Natural killer cell (primary cell): ENCODE measurements at regions of chr19 and their contacts with region 1.

Region 1: GRCh38 chr19:13104360-13104847 is 1.7 kb upstream of the LYL1 start:
- DNase-seq: peak; percentile 69 to 77
- ATAC-seq: peak; percentile 58 to 62 (median 60)
- H3K4me3 ChIP-seq: peak overlapping the region; percentile 49
- H3K4me3 Mint-ChIP-seq: peak overlapping the region; percentile 93
- H3K27ac ChIP-seq: peak overlapping the region; percentile 84
- H3K27ac Mint-ChIP-seq: peak overlapping the region; percentile 70 to 88
- H3K4me1 ChIP-seq: peaks cover 69% of the 10 kb centered on the region
- H3K4me1 Mint-ChIP-seq: peaks cover 10 to 43% of the 10 kb centered on the region in 2 donors
- H3K27me3 ChIP-seq: no peaks in the 10 kb centered on the region
- H3K27me3 Mint-ChIP-seq: no peaks in the 10 kb centered on the region
- CTCF ChIP-seq: peak; percentile 97

Region 2: GRCh38 chr19:13044231-13044836 is 60.1 kb before region 1 on chr19:
- intact Hi-C with region 1: loop called (anchors 1 kb)
- DNase-seq: peak; percentile 79 to 83
- ATAC-seq: peak; percentile 83 to 93 (median 92)
- H3K4me3 ChIP-seq: no peak overlapping the region
- H3K4me3 Mint-ChIP-seq: peak overlapping the region; percentile 82
- H3K27ac ChIP-seq: peak overlapping the region; percentile 88
- H3K27ac Mint-ChIP-seq: peak overlapping the region; percentile 76 to 95
- H3K4me1 ChIP-seq: peaks cover 44% of the 10 kb centered on the region
- H3K4me1 Mint-ChIP-seq: peaks cover 33 to 42% of the 10 kb centered on the region in 2 donors
- H3K27me3 ChIP-seq: no peaks in the 10 kb centered on the region
- H3K27me3 Mint-ChIP-seq: peaks cover 0 to 11% of the 10 kb centered on the region in 2 donors
- CTCF ChIP-seq: no peak

Region 3: DNA sequence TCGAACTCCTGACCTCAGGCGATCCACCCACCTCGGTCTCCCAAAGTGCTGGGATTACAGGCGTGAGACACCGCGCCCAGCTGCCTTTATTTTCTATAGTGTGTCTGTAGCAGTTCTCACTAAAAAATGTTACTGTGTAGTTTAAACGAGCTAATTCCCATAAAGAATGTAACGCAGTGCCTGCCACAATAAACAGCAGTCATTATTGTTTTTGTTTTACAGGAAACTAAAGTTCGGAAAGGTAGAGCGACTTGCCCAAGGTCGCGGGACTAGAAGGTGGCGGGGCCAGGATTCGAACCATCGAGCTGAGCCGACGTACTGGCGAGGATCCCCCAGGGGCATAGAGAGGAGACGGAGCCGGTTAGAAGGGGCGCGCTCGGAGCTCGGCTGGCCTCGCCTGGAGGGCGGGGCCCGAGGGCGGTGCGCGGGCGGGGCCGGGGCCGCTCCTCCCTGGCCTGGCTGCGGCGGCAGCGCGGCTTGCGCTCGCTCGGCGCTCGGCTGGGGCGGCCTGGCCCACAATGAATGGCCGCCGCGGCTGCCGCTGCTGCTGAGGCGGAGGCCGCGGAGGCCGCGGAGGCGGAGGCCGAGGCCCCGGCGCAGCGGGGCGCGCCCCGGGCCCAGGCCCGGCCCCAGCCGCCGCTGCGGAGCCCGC is 13.5 kb after region 1 on chr19 and contains the start of gene NACC1:
- intact Hi-C with region 1: loop called (anchors 2 kb)
- DNase-seq: peak; percentile 86 to 92
- ATAC-seq: peak; percentile 77 to 92 (median 81)
- H3K4me3 ChIP-seq: peak within 1 kb of the TSS; percentile 74
- H3K4me3 Mint-ChIP-seq: peak within 1 kb of the TSS; percentile 99
- H3K27ac ChIP-seq: peak within 1 kb of the TSS; percentile 55
- H3K27ac Mint-ChIP-seq: peak within 1 kb of the TSS; percentile 88 to 93
- H3K4me1 ChIP-seq: peaks cover 65% of the 10 kb centered on the region
- H3K4me1 Mint-ChIP-seq: peaks cover 51 to 65% of the 10 kb centered on the region in 2 donors
- H3K27me3 ChIP-seq: no peaks in the 10 kb centered on the region
- H3K27me3 Mint-ChIP-seq: no peaks in the 10 kb centered on the region
- CTCF ChIP-seq: no peak
- total RNA-seq, gene NACC1: 41.2 to 48.7 (median 43.4) TPM